OCI-LY7 (cell line): ENCODE measurements at regions of chr12 and their contacts with region 1.

Region 1: DNA sequence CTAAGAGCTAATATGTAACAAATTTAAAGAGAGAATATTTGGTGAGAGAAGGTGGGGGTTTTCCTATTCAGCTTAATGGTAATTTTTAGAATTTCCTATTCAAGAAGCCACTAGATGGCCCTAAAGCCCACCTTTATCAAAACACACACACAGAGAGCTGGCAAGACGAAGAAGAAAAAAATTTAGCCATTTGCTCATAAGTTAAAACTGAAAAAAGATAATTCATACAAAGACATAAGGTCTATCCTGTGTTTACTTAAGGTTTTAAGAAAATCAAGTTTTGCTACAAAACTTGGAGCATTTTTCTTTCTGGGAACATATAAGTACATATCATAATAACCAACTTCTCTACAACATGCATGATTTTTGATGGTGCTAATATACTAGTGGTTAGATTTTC is 46.8 kb upstream of the PCED1B start:
- DNase-seq: peak; percentile 60
- H3K4me3 ChIP-seq: no peak overlapping the region
- H3K27ac ChIP-seq: no peak overlapping the region
- H3K4me1 ChIP-seq: no peaks in the 10 kb centered on the region
- CTCF ChIP-seq: peak; percentile 84

Region 2: GRCh38 chr12:47307680-47308399 is 275.2 kb after region 1 on chr12:
- CTCF ChIA-PET with region 1: no interaction called
- POLR2A ChIA-PET with region 1: interaction called, 3 read pairs
- intact Hi-C with region 1: loop called (anchors 1 kb)
- DNase-seq: peak; percentile 76
- H3K4me3 ChIP-seq: no peak overlapping the region
- H3K27ac ChIP-seq: no peak overlapping the region
- H3K4me1 ChIP-seq: peaks cover 15% of the 10 kb centered on the region
- CTCF ChIP-seq: peak; percentile 96

Region 3: DNA sequence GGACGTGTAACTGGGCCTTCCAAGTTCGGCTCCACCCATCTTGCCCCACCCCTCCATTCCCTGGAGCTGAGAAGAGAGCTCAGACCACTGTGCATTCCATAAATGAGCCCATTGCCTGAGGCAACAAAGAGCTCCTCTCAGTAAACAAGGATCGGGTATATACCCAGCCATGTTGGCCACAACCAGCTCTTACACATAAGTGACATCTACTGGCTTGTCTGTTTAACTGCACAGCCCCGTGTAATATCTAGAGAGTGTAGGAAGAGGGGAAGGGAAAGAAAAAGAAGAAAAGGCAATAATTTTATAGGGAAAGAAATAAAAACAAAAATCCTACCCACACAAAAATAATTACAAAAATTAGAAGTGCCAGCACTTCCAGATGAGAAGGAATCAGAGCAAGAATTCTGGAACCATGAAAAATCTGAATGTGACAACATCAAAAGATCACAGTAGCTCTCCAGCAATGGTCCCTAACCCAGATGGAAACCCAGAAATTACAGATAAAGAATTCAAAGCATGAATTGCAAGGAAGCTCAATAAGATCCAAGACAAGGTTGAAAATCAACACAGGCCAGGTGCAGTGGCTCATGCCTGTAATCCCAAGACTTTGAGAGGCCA is 365.1 kb after region 1 on chr12:
- CTCF ChIA-PET with region 1: no interaction called
- POLR2A ChIA-PET with region 1: no interaction called
- intact Hi-C with region 1: loop called (anchors 2 kb)
- DNase-seq: peak; percentile 60
- H3K4me3 ChIP-seq: no peak overlapping the region
- H3K27ac ChIP-seq: no peak overlapping the region
- H3K4me1 ChIP-seq: no peaks in the 10 kb centered on the region
- CTCF ChIP-seq: peak; percentile 86

Region 4: DNA sequence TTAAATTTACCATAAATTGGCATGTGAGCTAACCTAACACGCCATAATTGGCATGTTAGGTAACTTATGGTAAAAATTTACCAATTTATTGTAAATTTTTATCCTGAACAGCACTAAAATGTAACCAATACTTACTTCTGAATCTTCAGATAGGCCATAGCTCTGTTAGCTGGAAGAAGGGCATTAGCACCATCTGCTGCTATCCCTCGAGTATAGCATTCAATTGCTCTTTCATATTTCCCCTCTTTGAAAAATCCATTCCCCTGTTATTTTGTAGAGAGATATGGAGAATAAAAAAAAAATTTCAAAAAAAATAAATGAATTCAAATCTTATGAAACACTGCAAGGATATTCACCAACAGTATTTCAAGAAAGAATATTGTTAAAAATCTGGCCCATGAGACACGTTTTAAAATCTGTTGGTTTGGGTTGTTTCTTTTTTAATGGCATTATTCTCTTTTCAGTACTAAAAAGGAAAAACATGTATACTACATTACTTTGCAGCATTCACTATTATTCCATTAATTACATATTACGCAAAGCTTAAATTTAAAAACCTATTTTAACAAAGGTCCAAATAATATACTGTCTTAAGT is 654.1 kb after region 1 on chr12:
- CTCF ChIA-PET with region 1: no interaction called
- POLR2A ChIA-PET with region 1: no interaction called
- intact Hi-C with region 1: loop called (anchors 5 kb)
- DNase-seq: peak; percentile 44
- H3K4me3 ChIP-seq: no peak overlapping the region
- H3K27ac ChIP-seq: no peak overlapping the region
- H3K4me1 ChIP-seq: no peaks in the 10 kb centered on the region
- CTCF ChIP-seq: peak; percentile 79